ENCODE measurements at regions of chr17 and their contacts with region 1.

Region 1: DNA sequence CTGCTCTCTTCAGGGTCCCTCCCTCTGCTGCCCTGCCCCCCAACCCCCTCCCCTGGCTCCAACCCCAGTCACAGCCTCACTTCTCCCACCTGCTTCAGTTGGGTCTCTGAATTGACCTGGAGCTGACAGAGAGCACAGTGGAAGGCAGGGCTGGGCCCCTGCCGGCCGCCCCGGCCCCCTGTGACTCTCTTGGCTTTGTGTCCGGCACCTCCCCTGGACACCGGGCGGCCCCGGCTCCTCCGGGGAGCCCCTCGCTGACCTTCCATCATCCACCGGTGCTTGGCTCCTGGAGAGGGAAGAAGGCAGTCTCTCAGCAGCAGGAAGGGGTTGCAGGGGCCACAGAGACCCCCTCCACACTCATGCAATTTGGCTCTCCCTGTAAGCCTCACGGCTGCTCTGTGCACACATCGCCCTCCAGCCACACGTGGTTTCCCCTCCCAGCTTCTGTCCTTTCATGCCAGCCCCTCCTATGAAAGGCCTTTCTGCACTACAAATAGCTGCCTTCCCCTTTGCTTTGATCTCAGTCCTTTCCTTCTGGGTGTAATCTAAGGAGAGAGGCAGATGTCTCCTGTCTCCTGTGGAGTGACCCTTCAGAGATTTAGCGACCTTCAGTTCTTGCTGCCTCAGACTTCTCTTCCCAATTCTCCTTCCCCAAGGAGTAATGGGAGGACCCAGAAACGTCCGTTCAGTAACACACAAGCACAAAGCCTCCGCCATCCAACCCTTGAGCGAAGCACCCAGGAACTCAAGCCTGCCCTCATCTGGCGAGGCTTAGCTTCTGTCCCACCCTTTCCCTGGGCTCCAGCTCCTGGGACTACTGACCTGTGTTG is 8.3 kb downstream of the NKIRAS2 start:
- DNase-seq: no peak
- H3K4me3 ChIP-seq: no peak overlapping the region
- H3K27ac ChIP-seq: no peak overlapping the region
- H3K4me1 ChIP-seq: peaks cover 20% of the 10 kb centered on the region
- H3K27me3 ChIP-seq: peaks cover 0 to 1% of the 10 kb centered on the region in 2 experiments
- CTCF ChIP-seq: no peak
- POLR2A ChIP-seq: no peak

Region 2: GRCh38 chr17:42039794-42040763 is 11.9 kb after region 1 on chr17:
- CTCF ChIA-PET with region 1: interaction called, 21 read pairs
- POLR2A ChIA-PET with region 1: no interaction called
- dilution Hi-C with region 1: no loop called
- intact Hi-C with region 1: no loop called
- DNase-seq: no peak
- H3K4me3 ChIP-seq: peak overlapping the region in 1 of 3 experiments; percentile 23
- H3K27ac ChIP-seq: no peak overlapping the region
- H3K4me1 ChIP-seq: no peaks in the 10 kb centered on the region
- H3K27me3 ChIP-seq: no peaks in the 10 kb centered on the region
- CTCF ChIP-seq: no peak
- POLR2A ChIP-seq: no peak

Region 3: DNA sequence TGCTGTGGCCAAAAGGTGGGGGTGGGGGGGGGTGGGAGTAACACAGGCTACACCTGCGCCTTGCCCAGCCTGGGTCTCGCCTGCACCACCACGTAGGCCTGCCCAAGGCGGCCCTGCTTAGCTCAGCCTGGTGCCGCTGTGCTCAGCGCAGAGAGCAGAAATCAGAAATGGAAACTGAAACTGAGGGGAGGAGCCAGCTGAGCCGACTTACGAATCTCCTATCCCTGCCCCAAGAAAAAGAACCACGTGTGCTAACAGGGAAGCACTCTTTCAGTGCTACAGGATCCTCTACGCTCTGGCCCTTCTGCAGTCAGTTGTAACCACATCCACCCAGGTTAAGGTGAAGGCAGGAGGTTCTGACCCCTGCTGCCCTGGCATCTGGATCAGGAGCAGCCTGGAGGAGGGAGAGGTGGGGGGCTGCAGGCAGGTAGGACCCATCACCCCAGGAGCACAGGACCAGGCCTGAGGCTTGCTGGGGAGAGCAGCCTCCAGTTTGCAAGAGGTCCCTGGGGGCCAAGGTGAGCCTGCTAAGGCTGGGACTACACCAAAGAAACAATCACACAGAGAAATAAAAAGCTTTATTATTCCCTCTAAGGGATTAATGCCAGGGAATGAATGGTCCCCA is 84.5 kb after region 1 on chr17 and contains the start of gene DHX58:
- CTCF ChIA-PET with region 1: interaction called, 6 read pairs
- POLR2A ChIA-PET with region 1: no interaction called
- dilution Hi-C with region 1: no loop called
- intact Hi-C with region 1: loop called (anchors 1 kb)
- DNase-seq: peak; percentile 88
- H3K4me3 ChIP-seq: peak within 1 kb of the TSS in 2 of 3 experiments; percentile 29 to 31
- H3K27ac ChIP-seq: peak within 1 kb of the TSS; percentile 5
- H3K4me1 ChIP-seq: peaks cover 9% of the 10 kb centered on the region
- H3K27me3 ChIP-seq: no peaks in the 10 kb centered on the region
- CTCF ChIP-seq: no peak
- POLR2A ChIP-seq: peak; percentile 74
- total RNA-seq, gene DHX58: 3.1 and 6.4 TPM in 2 replicates